SK-N-SH (cell line): ENCODE measurements at regions of chr16 and their contacts with region 1.

Region 1: GRCh38 chr16:73956587-73957494 is 339.8 kb upstream of the PSMD7 start:
- DNase-seq: peak; percentile 65
- H3K4me3 ChIP-seq: no peak overlapping the region
- H3K27ac ChIP-seq: no peak overlapping the region
- H3K4me1 ChIP-seq: no peaks in the 10 kb centered on the region; a peak in 2 of 4 replicates
- H3K27me3 ChIP-seq: no peaks in the 10 kb centered on the region
- CTCF ChIP-seq: peak; percentile 95
- EP300 ChIP-seq: no peak
- RAD21 ChIP-seq: peak; percentile 91

Region 2: DNA sequence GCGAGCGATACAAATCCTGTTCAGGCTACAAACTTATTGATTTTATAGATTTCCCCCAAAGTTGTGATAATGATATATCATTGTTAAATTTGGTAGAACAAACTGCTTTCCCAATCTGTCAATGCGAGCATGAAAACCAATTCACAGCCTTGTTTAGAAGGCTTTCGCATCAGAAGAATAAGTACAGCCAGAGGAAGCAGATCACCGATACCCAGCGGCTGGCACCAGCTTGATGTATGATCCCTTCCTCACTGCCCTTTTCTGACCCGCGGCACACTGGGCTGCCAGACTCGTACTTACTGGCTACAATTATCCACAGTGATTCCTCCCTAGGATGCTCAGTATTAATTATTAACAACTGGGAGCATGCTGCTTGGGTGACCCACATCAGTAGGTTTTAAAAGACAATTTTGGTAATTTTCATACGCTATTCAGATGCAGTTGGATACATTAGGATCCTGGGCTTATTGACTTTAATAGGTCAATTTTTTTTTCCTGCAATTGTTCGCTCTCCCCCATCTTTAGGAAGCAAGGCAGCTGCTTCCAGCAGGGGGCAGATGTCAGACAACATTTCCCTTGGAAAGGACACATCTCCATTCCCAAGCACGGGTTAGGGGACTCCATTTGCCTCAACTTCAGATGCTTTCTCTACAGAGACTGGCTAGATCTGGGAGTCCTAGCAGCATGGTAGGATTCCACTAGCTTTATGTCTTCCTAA is 242.9 kb before region 1 on chr16:
- CTCF ChIA-PET with region 1: interaction called, 15 read pairs
- POLR2A ChIA-PET with region 1: no interaction called
- DNase-seq: peak; percentile 37
- H3K4me3 ChIP-seq: no peak overlapping the region
- H3K27ac ChIP-seq: no peak overlapping the region
- H3K4me1 ChIP-seq: no peaks in the 10 kb centered on the region; a peak in 1 of 4 replicates
- H3K27me3 ChIP-seq: no peaks in the 10 kb centered on the region
- CTCF ChIP-seq: peak; percentile 41
- EP300 ChIP-seq: no peak
- RAD21 ChIP-seq: peak; percentile 56

Region 3: DNA sequence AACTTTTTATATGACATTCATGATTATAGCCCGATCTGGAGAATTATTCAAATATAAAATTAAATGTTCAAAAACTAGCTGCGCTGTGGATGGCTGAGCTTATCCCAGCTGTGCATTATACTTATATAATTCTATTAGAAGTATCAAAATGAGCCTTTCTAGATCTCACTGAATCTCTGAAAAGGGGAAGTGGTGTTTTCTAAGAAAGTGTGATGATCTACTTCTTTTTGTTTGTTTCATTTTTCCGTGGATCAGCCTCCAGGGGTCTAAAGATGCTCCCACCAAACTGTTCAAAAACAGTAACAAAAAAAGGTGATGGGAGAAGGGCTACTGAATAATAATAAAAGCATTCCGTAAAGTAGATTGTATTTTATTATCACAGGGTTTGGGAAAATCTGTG is 71.5 kb before region 1 on chr16:
- CTCF ChIA-PET with region 1: interaction called, 15 read pairs
- POLR2A ChIA-PET with region 1: no interaction called
- DNase-seq: no peak
- H3K4me3 ChIP-seq: no peak overlapping the region
- H3K27ac ChIP-seq: no peak overlapping the region
- H3K4me1 ChIP-seq: no peaks in the 10 kb centered on the region; a peak in 1 of 4 replicates
- H3K27me3 ChIP-seq: no peaks in the 10 kb centered on the region; the same call in 1 of the 2 replicates
- CTCF ChIP-seq: no peak
- EP300 ChIP-seq: no peak
- RAD21 ChIP-seq: no peak

Region 4: GRCh38 chr16:73966851-73967250 is 10.0 kb after region 1 on chr16:
- CTCF ChIA-PET with region 1: interaction called, 76 read pairs
- POLR2A ChIA-PET with region 1: no interaction called
- DNase-seq: no peak
- H3K4me3 ChIP-seq: no peak overlapping the region
- H3K27ac ChIP-seq: no peak overlapping the region
- H3K4me1 ChIP-seq: peaks cover 0 to 4% of the 10 kb centered on the region in 2 experiments; a peak in 2 of 4 replicates
- H3K27me3 ChIP-seq: no peaks in the 10 kb centered on the region
- CTCF ChIP-seq: no peak
- EP300 ChIP-seq: no peak
- RAD21 ChIP-seq: no peak